ENCODE measurements at regions of chr14 and their contacts with region 1.

Region 1: GRCh38 chr14:99524804-99525698 is 43.8 kb downstream of the CCNK start:
- DNase-seq: peak; percentile 35 to 73
- H3K4me3 ChIP-seq: no peak overlapping the region
- H3K4me1 ChIP-seq: peaks cover 29% of the 10 kb centered on the region
- H3K27me3 ChIP-seq: no peaks in the 10 kb centered on the region

Region 2: GRCh38 chr14:98769326-98769725 is 755.7 kb before region 1 on chr14:
- in situ Hi-C with region 1: no loop called
- DNase-seq: no peak
- H3K4me3 ChIP-seq: no peak overlapping the region
- H3K4me1 ChIP-seq: no peaks in the 10 kb centered on the region
- H3K27me3 ChIP-seq: no peaks in the 10 kb centered on the region

Region 3: GRCh38 chr14:98877065-98877464 is 648.0 kb before region 1 on chr14:
- in situ Hi-C with region 1: no loop called
- DNase-seq: no peak
- H3K4me3 ChIP-seq: no peak overlapping the region
- H3K4me1 ChIP-seq: no peaks in the 10 kb centered on the region
- H3K27me3 ChIP-seq: no peaks in the 10 kb centered on the region

Region 4: GRCh38 chr14:99009871-99010270 is 515.2 kb before region 1 on chr14:
- in situ Hi-C with region 1: no loop called
- DNase-seq: no peak
- H3K4me3 ChIP-seq: no peak overlapping the region
- H3K4me1 ChIP-seq: no peaks in the 10 kb centered on the region
- H3K27me3 ChIP-seq: no peaks in the 10 kb centered on the region

Region 5: DNA sequence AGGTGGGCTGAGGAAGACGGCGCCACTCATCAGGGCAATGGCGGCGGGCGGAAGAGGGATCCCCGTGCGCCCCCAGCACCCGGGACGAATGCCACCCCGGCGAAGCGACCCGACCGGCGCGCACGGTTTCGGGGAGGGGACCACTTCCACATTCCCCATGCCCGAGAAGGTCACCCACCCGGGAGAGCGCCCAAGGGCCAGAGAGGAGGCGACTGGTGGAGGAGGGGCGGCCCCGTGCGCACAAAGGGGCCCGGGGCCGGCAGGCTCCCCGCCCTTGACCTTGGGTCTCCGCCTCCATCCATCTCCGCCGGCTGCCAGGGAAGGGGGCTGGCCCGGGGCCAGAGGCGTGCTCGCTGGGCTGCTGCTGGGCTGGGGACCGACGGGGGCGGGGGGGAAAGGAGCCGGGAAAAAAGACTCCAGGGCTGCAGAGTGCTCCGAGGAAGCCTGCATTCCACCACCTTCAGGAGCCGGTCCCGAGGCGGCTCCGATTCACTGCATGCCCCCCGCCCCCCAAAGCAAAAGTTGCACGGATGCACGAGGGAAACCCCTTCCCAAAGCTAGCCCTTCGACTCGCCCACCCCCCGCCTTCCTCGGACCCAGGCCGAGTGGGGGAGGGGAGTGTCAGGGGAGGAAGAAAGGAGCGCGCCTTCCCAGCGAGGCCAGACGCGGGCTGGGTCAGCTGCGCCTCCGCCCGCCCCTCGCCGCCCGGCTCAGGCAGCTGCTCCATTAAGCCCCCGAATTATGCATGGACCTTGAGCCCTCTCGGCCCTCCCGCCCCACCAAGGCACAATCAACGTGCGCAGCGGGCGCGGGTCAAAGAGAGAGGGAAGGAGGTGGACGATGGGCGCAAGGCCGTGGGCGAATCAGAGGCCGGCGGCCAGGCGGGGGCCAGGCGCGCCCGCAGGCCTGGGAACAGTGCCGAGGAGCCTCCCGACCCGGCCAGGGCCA is 279.2 kb before region 1 on chr14:
- in situ Hi-C with region 1: no loop called
- DNase-seq: peak; percentile 65 to 86
- H3K4me3 ChIP-seq: peak overlapping the region; percentile 26
- H3K4me1 ChIP-seq: peaks cover 33% of the 10 kb centered on the region
- H3K27me3 ChIP-seq: no peaks in the 10 kb centered on the region

Region 6: GRCh38 chr14:99628832-99629618 is 104.0 kb after region 1 on chr14:
- in situ Hi-C with region 1: loop called (anchors 5 kb)
- DNase-seq: peak; percentile 62 to 88
- H3K4me3 ChIP-seq: no peak overlapping the region
- H3K4me1 ChIP-seq: 0 out of 2 replicates have a peak, but pooled peaks cover 2% of the 10 kb centered on the region
- H3K27me3 ChIP-seq: no peaks in the 10 kb centered on the region